Natural killer cell (primary cell): ENCODE measurements at regions of chr19 and their contacts with region 1.

Region 1: GRCh38 chr19:51166846-51167490 is 24.9 kb downstream of the SIGLEC7 start:
- DNase-seq: peak; percentile 61 to 68
- ATAC-seq: peak; percentile 94 to 99 (median 95)
- H3K4me3 ChIP-seq: peak overlapping the region; percentile 43
- H3K4me3 Mint-ChIP-seq: peak overlapping the region; percentile 88
- H3K27ac ChIP-seq: peak overlapping the region; percentile 32
- H3K27ac Mint-ChIP-seq: peak overlapping the region; percentile 80 to 83
- H3K4me1 ChIP-seq: peaks cover 34% of the 10 kb centered on the region
- H3K4me1 Mint-ChIP-seq: peaks cover 56 to 67% of the 10 kb centered on the region in 2 donors
- H3K27me3 ChIP-seq: no peaks in the 10 kb centered on the region
- H3K27me3 Mint-ChIP-seq: peaks cover 0 to 2% of the 10 kb centered on the region in 2 donors
- CTCF ChIP-seq: no peak

Region 2: GRCh38 chr19:50933640-50934039 is 233.3 kb before region 1 on chr19:
- intact Hi-C with region 1: loop called (anchors 2 kb)
- DNase-seq: no peak
- ATAC-seq: no peak
- H3K4me3 ChIP-seq: no peak overlapping the region
- H3K4me3 Mint-ChIP-seq: no peak overlapping the region
- H3K27ac ChIP-seq: no peak overlapping the region
- H3K27ac Mint-ChIP-seq: no peak overlapping the region
- H3K4me1 ChIP-seq: no peaks in the 10 kb centered on the region
- H3K4me1 Mint-ChIP-seq: peaks cover 0 to 4% of the 10 kb centered on the region in 2 donors
- H3K27me3 ChIP-seq: no peaks in the 10 kb centered on the region
- H3K27me3 Mint-ChIP-seq: peaks cover 22 to 25% of the 10 kb centered on the region in 2 donors
- CTCF ChIP-seq: no peak

Region 3: GRCh38 chr19:51020988-51021651 is 145.8 kb before region 1 on chr19:
- intact Hi-C with region 1: loop called (anchors 1 kb)
- DNase-seq: peak in 1 of 2 donors; percentile 50
- ATAC-seq: peak in 2 of 3 donors; percentile 24 to 37
- H3K4me3 ChIP-seq: no peak overlapping the region
- H3K4me3 Mint-ChIP-seq: no peak overlapping the region
- H3K27ac ChIP-seq: no peak overlapping the region
- H3K27ac Mint-ChIP-seq: no peak overlapping the region
- H3K4me1 ChIP-seq: peaks cover 28% of the 10 kb centered on the region
- H3K4me1 Mint-ChIP-seq: peaks cover 17 to 23% of the 10 kb centered on the region in 2 donors
- H3K27me3 ChIP-seq: peaks cover 26% of the 10 kb centered on the region
- H3K27me3 Mint-ChIP-seq: peaks cover 30 to 37% of the 10 kb centered on the region in 2 donors
- CTCF ChIP-seq: peak; percentile 48

Region 4: GRCh38 chr19:51108066-51108804 is 58.7 kb before region 1 on chr19 and contains the start of gene CTU1:
- intact Hi-C with region 1: loop called (anchors 5 kb)
- DNase-seq: peak; percentile 94 to 99
- ATAC-seq: peak; percentile 96 to 99 (median 96)
- H3K4me3 ChIP-seq: peak within 1 kb of the TSS; percentile 80
- H3K4me3 Mint-ChIP-seq: peak within 1 kb of the TSS; percentile 94
- H3K27ac ChIP-seq: peak within 1 kb of the TSS; percentile 82
- H3K27ac Mint-ChIP-seq: peak within 1 kb of the TSS; percentile 92 to 99
- H3K4me1 ChIP-seq: peaks cover 21% of the 10 kb centered on the region
- H3K4me1 Mint-ChIP-seq: peaks cover 34 to 42% of the 10 kb centered on the region in 2 donors
- H3K27me3 ChIP-seq: no peaks in the 10 kb centered on the region
- H3K27me3 Mint-ChIP-seq: no peaks in the 10 kb centered on the region
- CTCF ChIP-seq: no peak
- total RNA-seq, gene CTU1: 2.5 to 6.5 (median 3.8) TPM

Region 5: DNA sequence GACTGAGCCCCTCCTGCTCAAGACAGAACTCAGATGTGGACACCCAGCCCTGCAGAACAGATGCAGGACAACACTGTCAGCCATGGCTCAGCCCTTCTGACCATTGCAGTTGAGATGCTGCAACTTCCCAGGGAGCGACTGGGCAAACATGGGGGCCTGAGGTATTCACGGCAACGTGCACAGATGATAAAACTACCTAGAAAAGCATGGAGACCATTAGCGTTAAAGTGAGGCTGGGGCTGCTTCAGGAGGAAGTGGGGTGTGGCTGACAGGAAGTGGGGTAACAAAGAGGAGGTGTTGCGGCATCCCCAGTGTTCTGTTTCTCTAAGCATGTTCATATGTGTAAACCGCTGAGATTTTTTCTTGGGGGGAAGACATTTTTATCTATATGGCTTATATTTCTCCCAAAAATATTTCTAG is 43.6 kb before region 1 on chr19:
- intact Hi-C with region 1: loop called (anchors 5 kb)
- DNase-seq: peak; percentile 61 to 78
- ATAC-seq: peak; percentile 58 to 88 (median 85)
- H3K4me3 ChIP-seq: peak overlapping the region; percentile 19
- H3K4me3 Mint-ChIP-seq: peak overlapping the region; percentile 87
- H3K27ac ChIP-seq: peak overlapping the region; percentile 91
- H3K27ac Mint-ChIP-seq: peak overlapping the region; percentile 94 to 96
- H3K4me1 ChIP-seq: peaks cover 93% of the 10 kb centered on the region
- H3K4me1 Mint-ChIP-seq: peaks cover 77 to 90% of the 10 kb centered on the region in 2 donors
- H3K27me3 ChIP-seq: no peaks in the 10 kb centered on the region
- H3K27me3 Mint-ChIP-seq: no peaks in the 10 kb centered on the region
- CTCF ChIP-seq: no peak